ENCODE measurements at regions of chr12 and their contacts with region 1.

Region 1: DNA sequence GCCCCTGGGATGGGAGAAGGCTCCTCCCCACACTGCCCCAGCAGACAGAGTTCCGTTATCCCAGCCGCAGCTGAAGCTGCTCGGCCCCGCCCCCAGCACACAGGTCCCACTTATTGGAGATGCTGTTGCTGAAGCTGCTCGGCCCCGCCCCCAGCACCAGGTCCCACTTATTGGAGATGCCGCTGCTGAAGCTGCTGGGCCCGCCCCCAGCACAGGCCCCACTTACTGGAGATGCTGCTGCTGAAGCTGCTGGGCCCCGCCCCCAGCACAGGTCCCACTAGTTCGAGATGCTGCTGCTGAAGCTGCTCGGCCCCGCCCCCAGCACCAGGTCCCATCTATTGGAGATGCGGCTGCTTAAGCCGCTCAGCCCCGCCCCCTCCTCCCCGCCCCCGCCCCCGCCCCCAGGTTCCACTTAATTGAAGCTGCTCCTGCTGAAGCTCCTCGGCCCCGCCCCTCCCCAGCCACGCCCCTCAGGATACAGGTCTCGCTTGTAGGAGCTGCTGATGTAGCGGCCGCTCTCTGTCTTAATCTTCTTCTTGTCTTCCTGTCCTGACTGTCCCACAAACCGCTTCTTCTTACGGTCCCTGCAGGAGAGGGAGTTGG is 12.0 kb downstream of the CFAP73 start:
- DNase-seq: no peak
- ATAC-seq: no peak
- H3K4me3 ChIP-seq: no peak overlapping the region
- H3K4me3 Mint-ChIP-seq: no peak overlapping the region
- H3K27ac ChIP-seq: no peak overlapping the region
- H3K27ac Mint-ChIP-seq: no peak overlapping the region
- H3K4me1 ChIP-seq: no peaks in the 10 kb centered on the region
- H3K4me1 Mint-ChIP-seq: peaks cover 0 to 4% (median 2%) of the 10 kb centered on the region in 3 donors
- H3K27me3 ChIP-seq: no peaks in the 10 kb centered on the region
- H3K27me3 Mint-ChIP-seq: no peaks in the 10 kb centered on the region

Region 2: GRCh38 chr12:113056631-113057488 is 104.7 kb before region 1 on chr12 and contains the start of gene DTX1:
- CTCF ChIA-PET with region 1: no interaction called
- POLR2A ChIA-PET with region 1: interaction called in 1 of 2 experiments, 11 read pairs
- DNase-seq: peak in 25 of 35 experiments; percentile 8 to 54 (median 25)
- ATAC-seq: peak; percentile 77 to 83 (median 79)
- H3K4me3 ChIP-seq: peak within 1 kb of the TSS; percentile 51 to 68
- H3K4me3 Mint-ChIP-seq: peak within 1 kb of the TSS; percentile 79 to 83 (median 81)
- H3K27ac ChIP-seq: peak within 1 kb of the TSS; percentile 24
- H3K27ac Mint-ChIP-seq: peak within 1 kb of the TSS; percentile 72 to 74
- H3K4me1 ChIP-seq: peaks cover 3 to 66% of the 10 kb centered on the region in 2 experiments
- H3K4me1 Mint-ChIP-seq: peaks cover 32 to 43% (median 36%) of the 10 kb centered on the region in 3 donors
- H3K27me3 ChIP-seq: peaks cover 0 to 17% of the 10 kb centered on the region in 2 experiments
- H3K27me3 Mint-ChIP-seq: peaks cover 0 to 1% of the 10 kb centered on the region in 2 donors
- total RNA-seq, gene DTX1: 5.6 to 12.0 (median 10.4) TPM

Region 3: GRCh38 chr12:113456761-113457160 is 295.2 kb after region 1 on chr12:
- CTCF ChIA-PET with region 1: no interaction called
- POLR2A ChIA-PET with region 1: no interaction called
- DNase-seq: no peak
- ATAC-seq: no peak
- H3K4me3 ChIP-seq: no peak overlapping the region
- H3K4me3 Mint-ChIP-seq: no peak overlapping the region
- H3K27ac ChIP-seq: no peak overlapping the region
- H3K27ac Mint-ChIP-seq: no peak overlapping the region
- H3K4me1 ChIP-seq: no peaks in the 10 kb centered on the region
- H3K4me1 Mint-ChIP-seq: peaks cover 0 to 4% (median 0%) of the 10 kb centered on the region in 3 donors
- H3K27me3 ChIP-seq: peaks cover 9 to 38% of the 10 kb centered on the region in 2 experiments
- H3K27me3 Mint-ChIP-seq: peaks cover 35 to 50% of the 10 kb centered on the region in 2 donors

Measured in T-cell (primary cell).